ENCODE measurements at regions of chr17 and their contacts with region 1.

Region 1: GRCh38 chr17:59786536-59787319 is 79.3 kb downstream of the VMP1 start:
- DNase-seq: peak; percentile 89
- H3K4me3 Mint-ChIP-seq: peak overlapping the region; percentile 77
- H3K27ac Mint-ChIP-seq: peak overlapping the region; percentile 100
- H3K4me1 Mint-ChIP-seq: peaks cover 64% of the 10 kb centered on the region
- H3K27me3 Mint-ChIP-seq: no peaks in the 10 kb centered on the region

Region 2: DNA sequence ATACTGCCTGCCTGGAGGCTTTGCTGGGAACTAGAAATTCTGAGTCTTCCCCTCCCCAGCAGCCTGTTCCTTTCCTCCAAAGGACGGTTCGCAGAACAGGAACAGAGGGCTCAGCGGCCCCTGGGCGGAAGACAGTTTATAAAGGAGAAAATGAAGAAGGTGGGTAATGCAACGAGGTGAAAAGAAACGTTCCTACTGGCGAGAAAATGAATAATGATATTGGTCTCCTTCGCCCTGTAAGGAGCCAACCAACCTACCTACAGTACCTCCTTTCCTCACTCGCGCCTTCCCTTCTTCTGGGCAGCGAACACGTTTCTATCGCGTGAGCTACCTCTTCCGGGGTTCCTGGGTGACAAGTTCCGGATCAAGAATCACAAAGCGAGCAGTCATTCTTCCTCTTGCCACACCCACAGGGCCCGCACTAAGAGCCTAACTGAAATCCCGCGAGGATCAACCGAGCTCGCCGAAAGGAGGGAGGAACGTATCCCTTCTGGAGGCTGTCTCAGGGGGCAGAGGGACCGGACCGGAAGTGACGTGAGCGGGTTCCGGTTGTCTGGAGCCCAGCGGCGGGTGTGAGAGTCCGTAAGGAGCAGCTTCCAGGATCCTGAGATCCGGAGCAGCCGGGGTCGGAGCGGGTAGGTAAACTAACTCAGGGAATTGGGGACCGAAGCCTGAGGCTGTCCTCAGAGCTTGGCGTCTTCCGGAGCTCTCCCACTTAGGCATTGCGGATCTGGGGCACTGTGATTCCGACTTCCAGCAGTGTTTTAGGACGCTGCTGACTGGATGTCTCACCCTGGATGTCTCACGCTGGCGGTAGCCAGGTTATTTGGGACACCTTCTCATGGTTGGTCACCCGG is 79.4 kb before region 1 on chr17 and contains the starts of genes PTRH2 and VMP1:
- CTCF ChIA-PET with region 1: no interaction called
- POLR2A ChIA-PET with region 1: interaction called, 5 read pairs
- intact Hi-C with region 1: loop called (anchors 1 kb)
- DNase-seq: peak; percentile 97
- H3K4me3 Mint-ChIP-seq: peak within 1 kb of the TSS; percentile 96
- H3K27ac Mint-ChIP-seq: peak within 1 kb of the TSS; percentile 93
- H3K4me1 Mint-ChIP-seq: peaks cover 58% of the 10 kb centered on the region
- H3K27me3 Mint-ChIP-seq: no peaks in the 10 kb centered on the region
- total RNA-seq, gene PTRH2: 35.9 TPM
- total RNA-seq, gene VMP1: 517 to 553 TPM

Region 3: DNA sequence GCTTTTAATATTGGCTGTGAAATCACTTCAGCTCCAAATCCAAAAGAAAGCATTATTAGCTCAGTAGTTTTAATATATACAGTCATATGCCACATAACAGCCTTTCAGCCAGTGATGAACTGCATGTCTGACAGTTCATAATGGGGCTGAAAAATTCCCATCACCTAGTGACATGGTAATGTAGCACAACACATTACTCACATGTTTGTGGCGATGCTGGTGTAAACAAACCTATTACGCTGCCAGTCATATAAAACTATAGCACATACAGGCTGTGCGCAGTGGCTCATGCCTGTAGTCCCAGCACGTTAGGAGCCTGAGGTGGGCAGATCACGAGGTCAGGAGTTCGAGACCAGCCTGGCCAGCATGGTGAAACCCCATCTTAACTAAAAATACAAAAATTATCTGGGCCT is 13.8 kb after region 1 on chr17:
- CTCF ChIA-PET with region 1: interaction called, 4 read pairs
- POLR2A ChIA-PET with region 1: interaction called, 44 read pairs
- intact Hi-C with region 1: loop called (anchors 1 kb)
- DNase-seq: no peak
- H3K4me3 Mint-ChIP-seq: no peak overlapping the region
- H3K27ac Mint-ChIP-seq: peak overlapping the region; percentile 28
- H3K4me1 Mint-ChIP-seq: peaks cover 30% of the 10 kb centered on the region
- H3K27me3 Mint-ChIP-seq: no peaks in the 10 kb centered on the region

Region 4: DNA sequence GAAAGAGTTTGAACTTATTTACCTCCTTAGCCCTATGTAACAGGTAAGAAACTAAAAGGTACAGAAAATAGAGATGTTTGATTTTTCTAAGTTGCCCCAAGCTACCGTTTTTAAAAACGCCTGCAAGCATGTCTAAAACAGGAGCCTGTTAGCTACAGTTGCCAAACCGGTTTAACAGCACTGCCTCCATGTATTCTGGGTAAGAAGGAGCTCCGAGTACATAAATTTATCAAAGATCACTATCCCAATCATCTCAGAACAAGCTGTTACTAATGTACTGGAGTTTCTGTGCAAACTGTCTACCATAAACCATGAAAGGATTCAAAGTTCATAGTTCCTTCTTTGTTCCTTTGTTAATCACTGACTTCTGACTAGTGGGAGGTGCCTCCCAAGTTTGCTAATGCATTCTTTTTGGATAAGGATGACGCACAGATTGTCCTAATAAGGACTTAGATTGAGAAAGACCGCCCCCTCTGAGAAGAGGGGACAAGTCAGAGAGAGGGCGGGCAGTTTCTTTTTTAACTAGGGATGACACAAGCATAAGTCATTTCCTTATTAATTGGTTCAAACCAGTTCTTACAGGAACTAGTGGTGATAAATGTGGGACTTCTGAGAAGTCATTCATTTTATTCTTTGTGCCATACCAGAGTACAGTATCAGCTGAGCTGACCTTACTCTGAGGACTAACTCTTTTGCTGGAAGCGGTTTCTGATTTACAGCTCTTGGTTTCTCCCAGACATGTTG is 50.8 kb after region 1 on chr17:
- CTCF ChIA-PET with region 1: interaction called, 20 read pairs
- POLR2A ChIA-PET with region 1: interaction called, 1,283 read pairs
- intact Hi-C with region 1: loop called (anchors 1 kb)
- DNase-seq: peak; percentile 75
- H3K4me3 Mint-ChIP-seq: peak overlapping the region; percentile 98
- H3K27ac Mint-ChIP-seq: peak overlapping the region; percentile 100
- H3K4me1 Mint-ChIP-seq: peaks cover 50% of the 10 kb centered on the region
- H3K27me3 Mint-ChIP-seq: peaks cover 26% of the 10 kb centered on the region

Region 5: GRCh38 chr17:59853168-59853918 is 66.6 kb after region 1 on chr17:
- CTCF ChIA-PET with region 1: interaction called, 4 read pairs
- POLR2A ChIA-PET with region 1: interaction called, 1,283 read pairs
- intact Hi-C with region 1: loop called (anchors 1 kb)
- DNase-seq: peak; percentile 84
- H3K4me3 Mint-ChIP-seq: peak overlapping the region; percentile 12
- H3K27ac Mint-ChIP-seq: peak overlapping the region; percentile 84
- H3K4me1 Mint-ChIP-seq: peaks cover 48% of the 10 kb centered on the region
- H3K27me3 Mint-ChIP-seq: no peaks in the 10 kb centered on the region

Region 6: GRCh38 chr17:59903455-59903854 is 116.7 kb after region 1 on chr17:
- CTCF ChIA-PET with region 1: no interaction called
- POLR2A ChIA-PET with region 1: no interaction called
- intact Hi-C with region 1: no loop called
- DNase-seq: no peak
- H3K4me3 Mint-ChIP-seq: no peak overlapping the region
- H3K27ac Mint-ChIP-seq: peak overlapping the region; percentile 39
- H3K4me1 Mint-ChIP-seq: peaks cover 28% of the 10 kb centered on the region
- H3K27me3 Mint-ChIP-seq: no peaks in the 10 kb centered on the region